ENCODE measurements at regions of chr7 and their contacts with region 1.

Region 1: GRCh38 chr7:134605973-134606923 is 40.4 kb upstream of the BPGM start:
- DNase-seq: peak; percentile 85

Region 2: DNA sequence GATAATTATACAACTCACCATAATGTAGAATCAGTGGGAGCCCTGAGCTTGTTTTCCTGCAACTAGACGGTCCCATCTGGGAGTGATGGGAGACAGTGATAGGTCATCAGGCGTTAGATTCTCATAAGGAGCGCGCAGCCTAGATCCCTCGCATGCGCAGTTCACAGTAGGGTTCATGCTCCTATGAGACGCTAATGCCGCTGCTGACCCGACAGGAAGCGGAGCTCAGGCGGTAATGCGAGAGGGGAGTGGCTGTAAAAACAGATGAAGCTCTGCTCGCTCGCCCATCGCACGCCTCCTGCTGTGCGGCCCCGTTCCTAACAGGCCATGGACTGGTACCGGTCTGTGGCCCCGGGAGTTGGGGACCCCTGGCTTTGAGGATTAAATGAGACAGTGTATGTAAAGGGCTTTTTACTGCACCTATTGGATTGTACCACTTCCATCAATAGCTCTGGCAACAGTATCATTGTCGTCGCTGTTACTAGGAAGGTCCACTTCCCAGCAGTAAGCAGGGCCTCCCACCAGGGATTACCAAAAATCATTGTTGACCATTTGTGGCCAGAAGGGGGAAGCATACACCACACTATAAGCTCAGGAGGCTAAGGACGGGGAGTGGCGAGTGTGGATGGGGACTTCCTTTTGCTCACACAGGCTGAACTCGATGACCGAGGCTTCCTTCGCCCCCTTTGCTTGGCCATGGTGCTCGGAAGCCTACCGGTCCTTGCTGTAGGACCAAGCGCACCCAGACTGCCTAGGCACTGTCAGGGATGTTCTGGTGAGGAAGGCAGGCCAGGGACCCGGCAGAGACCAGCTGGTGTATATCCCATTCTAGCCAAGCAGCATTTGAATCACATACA is 173.7 kb before region 1 on chr7:
- intact Hi-C with region 1: loop called in 1 of 2 experiments (anchors 5 kb)
- DNase-seq: peak; percentile 95

Region 3: GRCh38 chr7:134514663-134515062 is 91.6 kb before region 1 on chr7:
- intact Hi-C with region 1: loop called (anchors 10 kb)
- DNase-seq: no peak